ENCODE measurements at regions of chr16 and their contacts with region 1.

Region 1: GRCh38 chr16:18969050-18969854 is 14.5 kb upstream of the TMC7 start:
- DNase-seq: peak; percentile 73
- H3K4me3 ChIP-seq: peak overlapping the region in 1 of 3 experiments; percentile 26
- H3K27ac ChIP-seq: no peak overlapping the region
- H3K4me1 ChIP-seq: no peaks in the 10 kb centered on the region
- H3K27me3 ChIP-seq: no peaks in the 10 kb centered on the region
- CTCF ChIP-seq: peak; percentile 89 to 92
- POLR2A ChIP-seq: no peak

Region 2: DNA sequence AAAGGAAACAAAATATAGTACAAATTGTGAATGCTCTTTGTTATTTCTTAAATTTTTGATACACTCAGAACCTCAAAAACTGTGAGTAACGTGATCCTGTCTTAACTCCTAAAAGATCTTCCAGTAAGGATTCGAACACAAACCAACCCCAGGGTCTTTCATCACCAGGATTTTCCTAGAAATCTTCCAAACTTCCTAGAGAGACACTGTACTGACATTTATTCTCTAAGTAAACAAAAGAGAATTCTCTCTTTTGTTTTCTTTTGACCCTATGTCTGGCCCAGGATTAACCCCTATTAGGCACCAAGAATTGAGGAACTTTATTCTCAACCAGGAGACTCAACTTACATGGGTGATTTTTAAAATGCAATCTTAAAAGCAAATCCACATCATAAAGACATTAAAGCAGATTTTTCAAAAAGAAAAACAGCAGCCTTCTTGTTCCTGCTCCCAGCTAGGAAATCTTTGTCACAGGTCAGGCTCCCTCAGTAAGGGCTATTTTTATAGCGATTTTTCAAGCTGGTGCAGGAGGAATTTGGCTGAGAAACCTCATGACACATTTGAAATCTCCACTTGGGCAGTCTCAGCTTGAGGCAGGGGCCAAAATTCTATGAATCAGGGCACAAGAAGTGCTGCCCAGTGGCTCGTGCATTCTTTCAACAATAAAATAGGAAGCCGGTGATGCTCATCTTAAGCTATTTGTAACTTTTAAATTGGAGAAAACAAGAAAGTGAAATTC is 36.8 kb before region 1 on chr16:
- CTCF ChIA-PET with region 1: no interaction called
- POLR2A ChIA-PET with region 1: no interaction called
- dilution Hi-C with region 1: no loop called
- intact Hi-C with region 1: loop called (anchors 2 kb)
- DNase-seq: no peak
- H3K4me3 ChIP-seq: no peak overlapping the region
- H3K27ac ChIP-seq: no peak overlapping the region
- H3K4me1 ChIP-seq: no peaks in the 10 kb centered on the region
- H3K27me3 ChIP-seq: peaks cover 0 to 2% of the 10 kb centered on the region in 2 experiments
- CTCF ChIP-seq: no peak
- POLR2A ChIP-seq: no peak

Region 3: GRCh38 chr16:18950469-18951185 is 18.6 kb before region 1 on chr16:
- CTCF ChIA-PET with region 1: interaction called, 7 read pairs
- POLR2A ChIA-PET with region 1: no interaction called
- dilution Hi-C with region 1: no loop called
- intact Hi-C with region 1: loop called (anchors 1 kb)
- DNase-seq: no peak
- H3K4me3 ChIP-seq: no peak overlapping the region
- H3K27ac ChIP-seq: no peak overlapping the region
- H3K4me1 ChIP-seq: no peaks in the 10 kb centered on the region
- H3K27me3 ChIP-seq: no peaks in the 10 kb centered on the region
- CTCF ChIP-seq: no peak
- POLR2A ChIP-seq: no peak

Region 4: GRCh38 chr16:19094541-19095365 is 125.5 kb after region 1 on chr16:
- CTCF ChIA-PET with region 1: no interaction called
- POLR2A ChIA-PET with region 1: no interaction called
- dilution Hi-C with region 1: no loop called
- intact Hi-C with region 1: no loop called
- DNase-seq: no peak
- H3K4me3 ChIP-seq: no peak overlapping the region
- H3K27ac ChIP-seq: no peak overlapping the region
- H3K4me1 ChIP-seq: peaks cover 17% of the 10 kb centered on the region
- H3K27me3 ChIP-seq: no peaks in the 10 kb centered on the region
- CTCF ChIP-seq: no peak
- POLR2A ChIP-seq: no peak

Region 5: DNA sequence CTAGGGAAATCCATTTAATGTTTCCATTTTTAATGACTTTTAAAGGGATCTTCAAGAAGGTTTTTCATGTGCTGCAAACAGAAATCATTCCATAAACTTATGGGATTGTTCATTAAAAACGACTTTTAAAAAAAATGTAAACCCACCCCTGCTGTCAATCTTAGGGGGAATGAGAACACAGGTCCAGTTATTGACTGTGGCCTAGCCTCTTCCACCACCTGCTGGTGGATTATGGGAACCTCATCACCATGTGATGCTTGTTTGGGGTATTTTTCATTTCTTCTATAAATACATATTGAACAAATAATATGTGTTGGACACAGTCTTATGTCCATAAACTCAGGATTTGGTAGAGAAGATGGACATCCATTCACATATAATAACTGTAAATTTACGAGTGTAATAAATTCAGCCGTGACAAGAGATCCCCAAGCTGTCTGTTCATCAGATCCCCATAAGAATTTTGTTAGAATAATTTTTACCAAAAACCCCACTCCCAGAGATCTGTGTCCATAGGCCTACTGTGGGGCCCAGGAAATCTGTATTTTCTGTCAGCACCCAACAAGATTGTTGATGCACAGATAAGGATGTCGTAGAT is 406.4 kb after region 1 on chr16:
- CTCF ChIA-PET with region 1: no interaction called
- POLR2A ChIA-PET with region 1: no interaction called
- dilution Hi-C with region 1: no loop called
- intact Hi-C with region 1: loop called (anchors 5 kb)
- DNase-seq: peak; percentile 71
- H3K4me3 ChIP-seq: no peak overlapping the region
- H3K27ac ChIP-seq: no peak overlapping the region
- H3K4me1 ChIP-seq: no peaks in the 10 kb centered on the region
- H3K27me3 ChIP-seq: peaks cover 0 to 3% of the 10 kb centered on the region in 2 experiments
- CTCF ChIP-seq: peak; percentile 59 to 67
- POLR2A ChIP-seq: no peak

Measured in endothelial cell of umbilical vein (primary cell).